Dorsolateral prefrontal cortex (tissue), 120 donors: ENCODE measurements at regions of chr22 and their contacts with region 1.

Region 1: GRCh38 chr22:35380547-35381423 is at the start of gene HMOX1:
- DNase-seq: peak; percentile 59 to 91 (median 88)
- H3K4me3 ChIP-seq: peak within 1 kb of the TSS; percentile 41 to 81 (median 65)
- H3K27ac ChIP-seq: peak within 1 kb of the TSS in 55 of 59 donors; percentile 10 to 90 (median 70)
- H3K27me3 ChIP-seq: no peaks in the 10 kb centered on the region
- CTCF ChIP-seq: peak in 47 of 56 donors; percentile 8 to 60 (median 35)
- total RNA-seq, gene HMOX1: 1.5 to 40.4 (median 8.6) TPM

Region 2: GRCh38 chr22:35350539-35351503 is 30.0 kb before region 1 on chr22:
- intact Hi-C with region 1: loop called in 1 of 2 experiments (anchors 2 kb)
- DNase-seq: peak; percentile 67 to 94 (median 89)
- H3K4me3 ChIP-seq: peak overlapping the region; percentile 31 to 76 (median 61)
- H3K27ac ChIP-seq: peak overlapping the region in 55 of 59 donors; percentile 1 to 91 (median 64)
- H3K27me3 ChIP-seq: no peaks in the 10 kb centered on the region
- CTCF ChIP-seq: peak; percentile 82 to 97 (median 92)

Region 3: GRCh38 chr22:35399678-35400334 is 19.0 kb after region 1 on chr22 and contains the start of gene MCM5:
- intact Hi-C with region 1: loop called in 1 of 2 experiments (anchors 2 kb)
- DNase-seq: peak; percentile 94 to 97 (median 96)
- H3K4me3 ChIP-seq: peak within 1 kb of the TSS; percentile 60 to 98 (median 81)
- H3K27ac ChIP-seq: peak within 1 kb of the TSS in 50 of 59 donors; percentile 4 to 84 (median 66)
- H3K27me3 ChIP-seq: no peaks in the 10 kb centered on the region
- CTCF ChIP-seq: peak in 28 of 56 donors; percentile 5 to 55 (median 24)
- total RNA-seq, gene MCM5: 4.6 to 40.1 (median 13.6) TPM